ENCODE measurements at regions of chr14 and their contacts with region 1.

Region 1: DNA sequence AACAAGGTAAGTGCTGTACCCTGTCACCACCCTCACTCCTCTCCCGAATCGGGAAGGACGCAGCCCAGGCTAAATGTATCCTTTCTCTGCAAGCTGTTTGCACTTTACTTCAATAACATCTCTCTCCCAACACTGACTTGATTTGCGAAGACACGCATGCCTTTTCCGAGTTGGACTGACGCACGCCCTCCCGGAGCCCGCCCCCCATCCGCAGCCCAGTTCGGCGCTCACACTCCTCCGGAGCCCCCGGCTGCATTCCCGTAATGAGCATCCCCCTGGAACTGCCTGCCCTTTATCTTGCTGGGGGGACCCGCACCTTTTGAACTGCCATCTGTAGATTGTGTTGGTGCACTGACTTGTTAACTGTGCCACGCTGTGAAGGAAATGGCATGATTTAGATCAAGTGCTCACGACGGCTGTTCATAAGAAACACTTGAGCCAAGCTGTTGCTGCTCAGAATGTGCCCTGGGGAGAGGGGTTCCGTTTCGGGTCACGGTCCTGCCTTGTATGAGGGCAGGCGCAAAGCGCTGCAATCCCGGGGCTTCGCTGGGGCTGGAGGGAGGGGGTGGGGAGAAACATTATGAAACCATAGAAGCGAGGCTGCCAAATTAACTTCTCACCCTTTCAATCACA is 176.6 kb upstream of the CDKN3 start:
- DNase-seq: no peak
- H3K4me3 ChIP-seq: no peak overlapping the region
- H3K27ac ChIP-seq: no peak overlapping the region
- H3K4me1 ChIP-seq: no peaks in the 10 kb centered on the region
- H3K27me3 ChIP-seq: no peaks in the 10 kb centered on the region
- CTCF ChIP-seq: no peak

Region 2: DNA sequence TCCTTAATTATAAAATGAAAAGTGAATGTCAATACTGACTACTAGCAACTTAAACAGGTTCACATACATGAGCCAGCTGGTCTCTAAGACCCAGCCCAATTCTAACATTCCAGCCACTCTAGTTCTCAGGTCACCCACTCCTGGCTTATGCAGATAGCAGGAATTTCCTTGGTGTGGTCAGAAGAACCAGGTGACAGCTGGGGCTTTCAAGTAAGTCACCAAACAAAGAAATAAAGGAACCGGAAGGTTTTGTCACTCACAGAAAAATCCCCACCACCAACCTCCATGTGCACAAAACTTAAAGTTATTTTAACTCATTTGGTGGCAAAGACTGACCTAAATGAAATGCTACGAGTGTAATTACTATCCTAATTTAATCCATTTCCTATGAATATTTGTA is 47.0 kb after region 1 on chr14:
- CTCF ChIA-PET with region 1: no interaction called
- POLR2A ChIA-PET with region 1: no interaction called
- intact Hi-C with region 1: loop called (anchors 2 kb)
- DNase-seq: no peak
- H3K4me3 ChIP-seq: no peak overlapping the region
- H3K27ac ChIP-seq: no peak overlapping the region
- H3K4me1 ChIP-seq: no peaks in the 10 kb centered on the region
- H3K27me3 ChIP-seq: peaks cover 39% of the 10 kb centered on the region
- CTCF ChIP-seq: no peak

Region 3: DNA sequence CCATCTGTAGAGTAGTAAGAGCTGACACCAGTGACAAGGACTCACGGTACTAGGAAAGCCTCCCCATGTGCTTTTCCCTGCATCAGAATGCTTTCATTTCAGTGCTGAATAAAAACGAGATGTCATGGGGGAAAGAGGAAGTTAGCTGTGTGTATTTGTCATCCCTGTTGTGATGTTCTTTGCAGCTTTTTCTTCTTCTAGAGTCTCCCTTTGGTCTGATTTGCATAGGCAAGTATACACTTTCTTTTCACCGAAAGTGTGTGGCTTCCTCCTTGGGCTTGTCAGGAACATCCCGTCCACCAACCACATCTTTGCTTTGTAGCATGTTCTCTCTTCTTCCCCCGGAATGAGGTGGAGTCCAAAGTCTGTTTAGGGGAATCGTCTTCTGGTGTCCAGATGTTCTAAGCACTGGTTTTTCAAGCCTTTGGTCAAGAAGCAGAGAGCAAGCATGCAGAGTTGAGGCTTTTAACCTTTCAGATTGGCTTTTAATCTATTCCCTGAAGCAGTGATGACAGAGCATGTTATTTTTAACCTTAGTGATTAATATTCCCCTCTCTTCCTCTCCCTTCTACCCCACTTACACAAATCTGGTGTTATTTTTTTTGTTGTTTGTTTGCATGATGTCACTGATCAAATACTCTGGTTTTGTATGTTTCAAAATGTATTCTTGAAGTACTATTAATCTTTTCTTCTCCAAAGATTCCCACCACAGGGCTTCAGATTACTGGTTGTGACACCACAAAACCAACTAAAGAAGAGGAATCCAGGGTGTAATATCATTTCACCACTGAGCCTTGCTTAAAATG is 510.2 kb after region 1 on chr14:
- CTCF ChIA-PET with region 1: no interaction called
- POLR2A ChIA-PET with region 1: interaction called, 17 read pairs
- intact Hi-C with region 1: no loop called
- DNase-seq: no peak
- H3K4me3 ChIP-seq: no peak overlapping the region
- H3K27ac ChIP-seq: no peak overlapping the region
- H3K4me1 ChIP-seq: peaks cover 17% of the 10 kb centered on the region
- H3K27me3 ChIP-seq: no peaks in the 10 kb centered on the region
- CTCF ChIP-seq: no peak